ENCODE measurements at regions of chr14 and their contacts with region 1.

Region 1: GRCh38 chr14:63795532-63795931 is 57.3 kb upstream of the SYNE2 start:
- DNase-seq: no peak
- CTCF ChIP-seq: no peak

Region 2: DNA sequence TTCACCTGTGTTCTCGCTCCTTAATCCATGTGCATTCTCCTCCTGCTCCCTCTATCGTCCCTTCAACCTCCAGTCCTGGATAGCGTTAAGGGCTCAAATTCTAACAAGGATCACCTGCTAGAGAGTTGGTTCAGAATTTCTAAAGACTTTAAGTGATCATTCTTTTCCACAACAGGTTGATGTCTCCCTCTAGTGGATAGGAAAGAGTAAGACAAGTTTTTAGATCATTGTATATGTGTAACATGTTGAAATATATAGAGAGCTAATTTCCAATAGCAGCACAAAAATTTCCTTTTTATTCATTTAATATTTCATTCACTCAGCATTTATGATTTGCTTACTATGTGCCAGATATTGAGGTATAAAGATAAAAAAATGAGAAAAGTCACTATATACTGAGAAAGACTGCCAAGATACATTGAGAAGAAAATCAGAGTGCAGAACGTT is 508.0 kb after region 1 on chr14:
- in situ Hi-C with region 1: loop called (anchors 10 kb)
- DNase-seq: peak; percentile 75
- CTCF ChIP-seq: peak; percentile 67